HEK293T (cell line): ENCODE measurements at regions of chr4 and their contacts with region 1.

Region 1: GRCh38 chr4:154778264-154778663 is 2.8 kb upstream of the RBM46 start:
- DNase-seq: no peak

Region 2: GRCh38 chr4:154506253-154506652 is 272.0 kb before region 1 on chr4:
- CTCF ChIA-PET with region 1: no interaction called
- POLR2A ChIA-PET with region 1: no interaction called
- DNase-seq: peak; percentile 21

Region 3: GRCh38 chr4:154642373-154643009 is 135.8 kb before region 1 on chr4:
- CTCF ChIA-PET with region 1: interaction called, 12 read pairs
- POLR2A ChIA-PET with region 1: no interaction called
- DNase-seq: no peak

Region 4: DNA sequence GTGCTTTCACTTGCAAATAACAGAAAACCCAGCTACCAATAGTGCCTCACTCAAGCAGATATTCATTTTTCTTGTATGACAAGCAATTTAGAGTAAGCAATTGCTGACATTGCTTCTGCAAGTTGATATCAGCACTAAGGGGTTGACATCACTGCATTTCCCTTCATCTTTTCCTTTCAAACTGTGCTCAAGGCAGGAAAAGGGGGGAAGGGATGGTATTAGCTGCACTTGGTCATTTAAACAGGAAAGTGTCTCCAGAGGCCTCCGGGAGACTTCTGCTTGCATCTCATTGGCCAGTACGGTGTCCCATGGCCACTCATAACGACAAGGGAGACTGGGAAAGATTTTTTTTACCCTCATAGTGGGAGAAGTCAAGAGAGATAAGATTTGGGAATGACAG is 100.3 kb before region 1 on chr4:
- CTCF ChIA-PET with region 1: no interaction called
- POLR2A ChIA-PET with region 1: no interaction called
- DNase-seq: no peak

Region 5: GRCh38 chr4:154757713-154758112 is 20.6 kb before region 1 on chr4:
- CTCF ChIA-PET with region 1: no interaction called
- POLR2A ChIA-PET with region 1: no interaction called
- DNase-seq: no peak

Region 6: GRCh38 chr4:155220025-155220424 is 441.8 kb after region 1 on chr4:
- CTCF ChIA-PET with region 1: no interaction called
- POLR2A ChIA-PET with region 1: no interaction called
- DNase-seq: no peak